ENCODE measurements at regions of chr1 and their contacts with region 1.

Region 1: GRCh38 chr1:39258146-39258924 is 53.8 kb downstream of the MACF1 start:
- DNase-seq: peak; percentile 74
- H3K4me3 Mint-ChIP-seq: no peak overlapping the region
- H3K27ac Mint-ChIP-seq: no peak overlapping the region
- H3K4me1 Mint-ChIP-seq: peaks cover 29% of the 10 kb centered on the region
- H3K27me3 Mint-ChIP-seq: no peaks in the 10 kb centered on the region

Region 2: DNA sequence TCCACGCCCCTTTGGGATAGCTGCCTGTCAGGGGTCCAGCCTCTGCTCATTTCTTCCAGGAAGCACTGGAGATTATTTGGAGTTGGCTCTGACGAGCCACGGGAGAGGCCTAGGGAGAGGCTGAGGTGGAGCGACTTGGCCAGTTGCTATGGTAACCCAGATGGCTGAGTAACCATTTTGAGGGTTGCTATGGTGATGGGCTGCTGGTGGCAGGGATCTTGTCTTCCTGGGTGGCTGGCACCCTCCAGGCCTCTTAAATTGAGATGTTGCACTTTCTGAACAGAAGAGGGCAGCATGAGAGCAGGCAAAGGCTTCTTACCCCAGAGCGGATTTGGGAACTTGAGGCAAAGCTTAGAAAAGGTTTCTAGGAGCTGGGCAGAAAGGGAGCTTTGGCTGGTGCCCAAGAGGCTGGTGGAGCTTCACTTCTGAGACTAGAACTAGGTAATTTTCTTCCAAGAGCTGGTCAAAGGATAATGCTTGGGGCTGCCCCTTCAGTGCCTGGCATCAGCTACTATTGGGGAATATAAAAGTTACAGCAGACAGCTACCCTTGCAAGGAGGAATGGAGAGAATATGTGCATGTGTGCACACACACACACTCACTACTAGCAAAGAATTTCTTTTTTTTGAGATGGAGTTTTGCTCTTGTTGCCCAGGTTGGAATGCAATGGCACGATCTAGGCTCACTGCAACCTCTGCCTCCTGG is 159.6 kb before region 1 on chr1:
- CTCF ChIA-PET with region 1: interaction called, 21 read pairs
- DNase-seq: peak; percentile 74
- H3K4me3 Mint-ChIP-seq: no peak overlapping the region
- H3K27ac Mint-ChIP-seq: no peak overlapping the region
- H3K4me1 Mint-ChIP-seq: peaks cover 21% of the 10 kb centered on the region
- H3K27me3 Mint-ChIP-seq: peaks cover 22% of the 10 kb centered on the region

Region 3: GRCh38 chr1:39183503-39184353 is 74.6 kb before region 1 on chr1:
- CTCF ChIA-PET with region 1: interaction called, 208 read pairs
- DNase-seq: peak; percentile 91
- H3K4me3 Mint-ChIP-seq: peak overlapping the region; percentile 11
- H3K27ac Mint-ChIP-seq: peak overlapping the region; percentile 91
- H3K4me1 Mint-ChIP-seq: peaks cover 49% of the 10 kb centered on the region
- H3K27me3 Mint-ChIP-seq: no peaks in the 10 kb centered on the region

Region 4: DNA sequence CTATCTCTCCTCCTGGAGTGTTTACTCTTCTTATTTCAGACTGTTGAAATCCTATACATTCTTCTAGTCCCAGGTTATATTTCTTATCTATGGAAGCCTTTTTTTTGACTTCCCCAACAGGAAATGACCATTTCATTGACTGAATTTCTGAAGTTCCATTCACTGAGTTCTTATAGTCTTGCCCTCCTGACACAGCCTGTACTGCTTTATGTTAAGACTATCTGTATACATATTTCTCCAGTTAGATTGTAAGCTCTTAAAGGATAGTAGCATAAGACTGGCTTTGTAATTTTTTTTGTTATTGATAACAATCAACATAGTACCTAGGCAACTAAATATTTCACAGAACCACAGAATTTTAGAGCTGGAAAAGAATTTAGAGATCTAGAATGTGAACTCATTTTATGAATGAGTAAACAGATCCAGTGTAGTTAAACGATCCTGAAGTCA is 68.7 kb before region 1 on chr1:
- CTCF ChIA-PET with region 1: interaction called, 208 read pairs
- DNase-seq: no peak
- H3K4me3 Mint-ChIP-seq: no peak overlapping the region
- H3K27ac Mint-ChIP-seq: peak overlapping the region; percentile 47
- H3K4me1 Mint-ChIP-seq: peaks cover 85% of the 10 kb centered on the region
- H3K27me3 Mint-ChIP-seq: no peaks in the 10 kb centered on the region

Region 5: GRCh38 chr1:39204441-39205081 is 53.8 kb before region 1 on chr1 and contains the start of gene MACF1:
- CTCF ChIA-PET with region 1: interaction called, 20 read pairs
- DNase-seq: peak; percentile 56
- H3K4me3 Mint-ChIP-seq: peak within 1 kb of the TSS; percentile 95
- H3K27ac Mint-ChIP-seq: peak within 1 kb of the TSS; percentile 96
- H3K4me1 Mint-ChIP-seq: peaks cover 61% of the 10 kb centered on the region
- H3K27me3 Mint-ChIP-seq: no peaks in the 10 kb centered on the region

Region 6: DNA sequence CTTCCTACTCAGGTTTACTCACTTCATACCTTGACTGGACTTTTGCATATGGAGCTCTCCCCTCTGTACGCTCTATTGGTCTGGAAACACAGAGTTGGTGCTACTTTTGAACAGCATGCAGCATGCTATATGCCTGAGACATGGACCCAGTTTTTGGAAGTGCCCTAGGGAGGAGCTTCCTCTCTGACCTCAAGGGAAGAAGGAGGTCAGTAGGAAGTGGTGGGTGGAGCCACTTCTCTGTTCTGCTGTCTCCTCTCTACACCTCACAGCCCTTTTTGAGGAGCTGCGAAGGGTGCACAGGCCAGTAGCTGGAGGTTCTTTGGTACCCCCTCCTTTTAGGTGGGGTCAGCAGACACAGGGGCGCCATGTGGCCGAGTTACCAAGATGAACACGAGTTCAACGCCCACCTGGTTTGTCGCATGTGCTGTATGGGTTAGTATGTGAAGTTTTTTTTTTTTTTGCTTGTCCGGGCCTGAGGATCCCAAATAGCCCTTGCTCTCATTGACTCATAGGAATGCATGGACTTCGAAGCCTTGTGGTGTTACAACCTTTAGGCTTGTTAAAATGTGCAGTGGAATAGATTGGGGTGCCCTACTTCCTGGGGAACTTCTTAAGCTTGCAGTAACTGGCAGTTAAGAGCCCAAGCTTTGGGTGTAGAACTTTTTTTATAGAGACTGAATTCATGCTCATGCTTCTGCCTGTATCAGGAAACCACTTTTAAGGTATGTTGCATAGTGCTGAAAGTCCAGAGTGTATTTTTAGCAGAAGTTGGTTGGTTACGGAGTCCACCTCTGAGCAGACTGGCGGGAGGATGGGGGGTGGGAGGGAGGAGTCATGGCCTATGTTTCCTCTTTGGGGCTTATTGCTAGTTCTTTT is 43.1 kb before region 1 on chr1:
- CTCF ChIA-PET with region 1: interaction called, 10 read pairs
- DNase-seq: peak; percentile 64
- H3K4me3 Mint-ChIP-seq: peak overlapping the region; percentile 77
- H3K27ac Mint-ChIP-seq: peak overlapping the region; percentile 84
- H3K4me1 Mint-ChIP-seq: peaks cover 58% of the 10 kb centered on the region
- H3K27me3 Mint-ChIP-seq: no peaks in the 10 kb centered on the region

Region 7: DNA sequence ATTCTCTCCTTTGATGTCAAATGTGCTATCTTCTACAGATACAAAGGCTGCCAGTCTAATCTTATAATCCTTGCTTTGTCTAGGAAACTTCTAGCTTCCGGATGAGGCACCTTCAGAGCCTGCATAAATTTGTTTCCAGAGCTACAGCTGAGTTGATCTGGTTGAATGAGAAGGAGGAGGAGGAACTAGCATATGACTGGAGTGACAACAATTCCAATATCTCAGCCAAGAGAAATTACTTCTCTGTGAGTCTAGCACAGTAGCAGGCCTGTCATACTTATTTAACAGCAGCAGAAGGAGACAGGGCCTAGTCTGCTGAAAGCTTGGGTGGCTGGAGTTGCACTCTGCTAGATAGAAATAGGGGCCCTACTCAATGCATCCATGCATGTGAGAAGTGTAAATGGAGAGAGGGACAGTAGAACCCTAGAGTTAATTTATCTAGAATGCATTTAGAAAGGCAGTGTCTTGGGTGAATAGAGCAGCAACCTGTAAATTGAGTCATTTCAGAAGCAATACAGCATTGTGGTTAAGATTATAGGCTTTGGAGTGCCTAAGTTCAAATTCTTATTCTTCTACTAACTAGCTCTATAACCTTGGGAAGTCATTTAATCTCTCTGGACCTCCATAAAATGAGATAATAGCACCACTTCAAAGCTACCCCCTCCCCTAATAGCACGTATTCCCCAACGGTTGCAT is 35.2 kb after region 1 on chr1:
- CTCF ChIA-PET with region 1: no interaction called
- DNase-seq: no peak
- H3K4me3 Mint-ChIP-seq: no peak overlapping the region
- H3K27ac Mint-ChIP-seq: no peak overlapping the region
- H3K4me1 Mint-ChIP-seq: no peaks in the 10 kb centered on the region
- H3K27me3 Mint-ChIP-seq: no peaks in the 10 kb centered on the region